Endothelial cell of umbilical vein (primary cell): ENCODE measurements at regions of chr21 and their contacts with region 1.

Region 1: DNA sequence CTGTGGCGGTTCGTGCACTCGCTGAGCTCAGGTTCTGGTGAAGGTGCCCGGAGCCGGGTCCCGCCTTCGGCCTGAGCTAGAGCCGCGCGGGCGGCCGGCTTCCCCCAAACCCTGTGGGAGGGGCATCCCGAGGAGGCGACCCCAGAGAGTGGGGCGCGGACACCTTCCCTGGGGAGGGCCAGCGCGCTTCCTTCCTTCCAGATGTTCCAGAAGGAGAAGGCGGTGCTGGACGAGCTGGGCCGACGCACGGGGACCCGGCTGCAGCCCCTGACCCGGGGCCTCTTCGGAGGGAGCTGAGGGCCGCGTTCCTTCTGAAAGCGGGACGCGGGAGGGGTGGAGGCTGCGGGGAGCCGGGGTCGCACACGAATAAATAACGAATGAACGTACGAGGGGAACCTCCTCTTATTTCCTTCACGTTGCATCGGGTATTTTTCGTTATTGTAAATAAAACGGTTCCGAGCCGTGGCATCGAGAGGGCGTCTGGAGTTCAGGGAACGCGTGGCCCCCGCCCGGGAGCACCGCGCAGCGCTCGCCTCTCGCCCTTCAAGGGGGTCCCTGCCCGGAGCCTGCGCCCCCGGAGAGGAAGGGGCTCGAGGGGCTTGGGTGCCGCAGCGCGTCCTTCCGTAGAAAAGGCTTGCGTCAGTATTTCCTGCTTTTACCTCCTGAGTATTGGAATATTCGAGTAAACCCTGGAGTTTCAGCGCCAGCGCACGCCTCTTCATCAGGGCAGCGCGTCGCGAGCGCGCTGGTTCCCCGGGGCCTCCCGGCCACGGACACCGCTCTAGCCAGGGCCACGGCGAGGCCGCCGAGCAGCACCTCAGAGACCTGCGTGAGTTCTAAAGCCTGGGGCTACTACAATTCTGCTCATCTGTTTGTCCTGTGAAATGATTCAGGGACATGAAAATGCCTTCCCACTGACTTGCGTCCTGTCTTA is 11.5 kb downstream of the YBEY start:
- DNase-seq: peak; percentile 36
- H3K4me3 ChIP-seq: peak overlapping the region; percentile 41 to 63 (median 50)
- H3K27ac ChIP-seq: no peak overlapping the region
- H3K4me1 ChIP-seq: peaks cover 9% of the 10 kb centered on the region
- H3K27me3 ChIP-seq: no peaks in the 10 kb centered on the region
- CTCF ChIP-seq: no peak
- POLR2A ChIP-seq: no peak

Region 2: GRCh38 chr21:46285761-46286496 is 11.7 kb before region 1 on chr21 and contains the start of gene YBEY:
- CTCF ChIA-PET with region 1: interaction called, 4 read pairs
- POLR2A ChIA-PET with region 1: no interaction called
- dilution Hi-C with region 1: no loop called
- intact Hi-C with region 1: loop called (anchors 1 kb)
- DNase-seq: peak; percentile 88
- H3K4me3 ChIP-seq: peak within 1 kb of the TSS; percentile 53 to 90 (median 86)
- H3K27ac ChIP-seq: peak within 1 kb of the TSS; percentile 69
- H3K4me1 ChIP-seq: peaks cover 33% of the 10 kb centered on the region
- H3K27me3 ChIP-seq: no peaks in the 10 kb centered on the region
- CTCF ChIP-seq: peak; percentile 33 to 48
- POLR2A ChIP-seq: peak; percentile 94
- total RNA-seq, gene YBEY: 6.1 and 10.5 TPM in 2 replicates